ENCODE measurements at regions of chr16 and their contacts with region 1.

Region 1: DNA sequence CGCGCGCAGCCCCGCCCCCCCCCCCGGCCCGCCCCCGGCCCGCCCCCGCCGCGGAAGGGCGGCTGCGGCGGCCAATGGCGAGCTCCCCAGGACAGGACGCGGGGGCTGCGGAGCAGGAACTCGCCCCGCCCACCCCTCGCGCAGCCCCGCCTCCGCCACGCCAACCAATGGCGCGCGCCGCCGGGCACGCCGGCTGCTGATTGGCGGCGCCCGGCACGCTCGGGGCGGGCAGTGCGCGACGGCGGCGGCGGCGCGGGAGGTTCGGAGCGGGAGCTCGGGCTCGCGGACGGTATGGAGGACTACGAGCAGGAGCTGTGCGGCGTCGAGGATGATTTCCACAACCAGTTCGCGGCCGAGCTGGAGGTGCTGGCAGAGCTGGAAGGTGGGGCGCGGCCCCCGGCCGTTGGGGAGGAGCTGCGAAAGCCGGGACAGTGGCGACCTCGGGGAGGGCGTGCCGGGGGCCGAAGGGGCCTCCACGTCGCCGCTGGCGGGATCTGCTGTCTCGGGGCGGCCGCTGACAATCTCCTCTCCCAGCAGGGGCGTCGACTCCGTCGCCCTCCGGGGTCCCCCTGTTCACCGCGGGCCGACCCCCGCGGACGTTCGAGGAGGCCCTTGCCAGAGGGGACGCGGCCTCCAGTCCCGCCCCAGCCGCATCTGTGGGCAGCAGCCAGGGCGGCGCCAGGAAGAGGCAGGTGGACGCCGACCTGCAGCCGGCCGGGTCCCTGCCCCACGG is at the start of gene CHTF18:
- DNase-seq: peak; percentile 98
- H3K4me3 Mint-ChIP-seq: peak within 1 kb of the TSS; percentile 89
- H3K27ac Mint-ChIP-seq: peak within 1 kb of the TSS; percentile 81
- H3K4me1 Mint-ChIP-seq: peaks cover 5% of the 10 kb centered on the region
- H3K27me3 Mint-ChIP-seq: no peaks in the 10 kb centered on the region
- total RNA-seq, gene CHTF18: 141 and 147 TPM in 2 replicates

Region 2: GRCh38 chr16:714558-715476 is 73.7 kb before region 1 on chr16 and contains the start of gene METRN:
- intact Hi-C with region 1: loop called (anchors 1 kb)
- DNase-seq: peak; percentile 98
- H3K4me3 Mint-ChIP-seq: peak within 1 kb of the TSS; percentile 62
- H3K27ac Mint-ChIP-seq: no peak within 1 kb of the TSS
- H3K4me1 Mint-ChIP-seq: peaks cover 4% of the 10 kb centered on the region
- H3K27me3 Mint-ChIP-seq: peaks cover 24% of the 10 kb centered on the region
- total RNA-seq, gene METRN: 27.7 and 30.2 TPM in 2 replicates

Region 3: DNA sequence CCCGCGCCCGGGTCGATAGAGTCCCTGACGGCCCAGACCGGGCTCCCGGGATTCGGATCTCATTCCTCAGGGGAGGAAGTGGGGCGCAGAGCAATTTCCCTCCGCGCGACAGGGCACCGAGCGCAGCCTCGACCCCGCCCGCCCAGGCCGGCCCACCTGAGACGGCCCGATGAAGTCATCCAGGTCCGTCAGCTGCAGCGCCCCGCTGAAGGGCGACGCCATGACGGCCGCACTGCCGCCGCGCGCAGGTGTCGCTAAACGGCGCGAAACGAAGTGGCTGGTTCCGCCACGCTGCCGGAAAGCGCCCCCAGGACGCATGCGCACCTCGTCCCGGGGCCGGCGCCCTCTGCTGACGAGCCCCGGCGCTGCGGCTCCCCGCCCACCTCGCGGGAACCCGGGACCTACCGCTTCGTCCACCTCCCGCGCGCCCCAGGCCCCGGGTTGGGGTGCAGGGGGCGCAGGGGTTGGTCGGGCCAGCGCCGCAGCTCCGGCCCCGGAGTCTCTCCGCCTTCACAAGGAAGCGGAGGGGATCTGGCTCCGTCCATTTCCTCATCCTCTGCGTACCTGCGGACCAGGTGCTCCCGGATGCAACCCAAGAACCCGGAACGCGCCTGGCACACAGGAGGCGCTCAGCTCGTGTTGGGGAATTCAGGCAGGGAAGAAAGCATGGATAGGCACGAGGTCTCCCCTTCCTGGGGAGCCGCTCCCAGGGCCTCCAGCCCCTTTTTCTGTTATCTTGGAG is 47.6 kb before region 1 on chr16 and contains the start of gene CIAO3:
- intact Hi-C with region 1: loop called (anchors 5 kb)
- DNase-seq: peak; percentile 98
- H3K4me3 Mint-ChIP-seq: peak within 1 kb of the TSS; percentile 85
- H3K27ac Mint-ChIP-seq: peak within 1 kb of the TSS; percentile 62
- H3K4me1 Mint-ChIP-seq: peaks cover 9% of the 10 kb centered on the region
- H3K27me3 Mint-ChIP-seq: no peaks in the 10 kb centered on the region
- total RNA-seq, gene CIAO3: 39.5 and 42.5 TPM in 2 replicates

Region 4: GRCh38 chr16:807347-808084 is 19.0 kb after region 1 on chr16:
- intact Hi-C with region 1: loop called (anchors 1 kb)
- DNase-seq: peak; percentile 97
- H3K4me3 Mint-ChIP-seq: peak overlapping the region; percentile 99
- H3K27ac Mint-ChIP-seq: peak overlapping the region; percentile 97
- H3K4me1 Mint-ChIP-seq: peaks cover 12% of the 10 kb centered on the region
- H3K27me3 Mint-ChIP-seq: peaks cover 4% of the 10 kb centered on the region